Activated CD4-positive, alpha-beta T cell treated with anti-CD3 and anti-CD28 coated beads for 36 hours (primary cell): ENCODE measurements at regions of chr4 and their contacts with region 1.

Region 1: DNA sequence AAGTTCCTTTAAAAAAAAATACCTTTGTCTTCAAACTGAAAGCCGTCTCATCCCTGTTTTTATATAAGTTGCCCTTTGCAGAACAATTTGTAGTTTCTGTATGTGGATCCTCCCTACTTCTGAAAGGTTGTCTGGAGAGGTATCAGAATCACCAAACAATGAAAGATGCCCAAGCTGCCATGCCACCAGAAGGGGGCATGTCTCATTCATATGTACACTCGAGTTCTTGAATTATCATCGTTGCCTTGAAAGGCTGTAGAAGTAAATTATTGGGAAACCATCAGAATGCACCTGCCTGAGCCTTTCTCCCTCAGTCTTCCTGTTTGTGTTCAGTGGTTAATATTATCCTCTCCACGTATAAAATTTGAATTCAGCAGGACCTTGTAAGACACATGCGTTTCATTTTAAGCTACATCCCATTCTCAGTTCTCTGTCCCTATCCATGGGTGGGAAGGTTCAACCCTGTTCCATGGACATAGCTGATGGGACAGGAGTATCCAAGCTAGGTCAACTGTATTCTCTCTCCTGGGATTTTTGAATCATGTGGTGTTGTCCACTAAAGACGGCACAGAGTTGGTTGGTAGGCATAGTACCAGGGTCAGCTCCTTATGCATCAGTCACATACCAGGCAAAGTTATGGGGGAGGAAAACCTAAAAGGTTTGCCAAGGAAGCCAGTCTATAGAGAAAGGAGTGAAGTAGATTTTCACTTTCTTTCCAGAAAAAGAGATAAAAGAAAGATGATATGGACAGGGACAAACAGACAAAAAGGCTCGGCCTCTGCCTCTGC is 24.0 kb downstream of the GALNT7 start:
- DNase-seq: peak; percentile 12
- ATAC-seq: peak; percentile 28
- H3K4me3 Mint-ChIP-seq: no peak overlapping the region
- H3K27ac Mint-ChIP-seq: no peak overlapping the region
- H3K4me1 Mint-ChIP-seq: peaks cover 43% of the 10 kb centered on the region
- H3K27me3 Mint-ChIP-seq: no peaks in the 10 kb centered on the region

Region 2: GRCh38 chr4:173252024-173252935 is 59.7 kb after region 1 on chr4:
- CTCF ChIA-PET with region 1: interaction called, 5 read pairs
- POLR2A ChIA-PET with region 1: no interaction called
- intact Hi-C with region 1: loop called (anchors 5 kb)
- DNase-seq: peak; percentile 58
- ATAC-seq: peak; percentile 92
- H3K4me3 Mint-ChIP-seq: no peak overlapping the region
- H3K27ac Mint-ChIP-seq: no peak overlapping the region
- H3K4me1 Mint-ChIP-seq: peaks cover 14% of the 10 kb centered on the region
- H3K27me3 Mint-ChIP-seq: no peaks in the 10 kb centered on the region